ENCODE measurements at regions of chr12 and their contacts with region 1.

Region 1: GRCh38 chr12:75480469-75480949 is at the start of gene GLIPR1:
- DNase-seq: peak; percentile 98
- H3K4me3 ChIP-seq: peak within 1 kb of the TSS; percentile 56
- CTCF ChIP-seq: no peak

Region 2: DNA sequence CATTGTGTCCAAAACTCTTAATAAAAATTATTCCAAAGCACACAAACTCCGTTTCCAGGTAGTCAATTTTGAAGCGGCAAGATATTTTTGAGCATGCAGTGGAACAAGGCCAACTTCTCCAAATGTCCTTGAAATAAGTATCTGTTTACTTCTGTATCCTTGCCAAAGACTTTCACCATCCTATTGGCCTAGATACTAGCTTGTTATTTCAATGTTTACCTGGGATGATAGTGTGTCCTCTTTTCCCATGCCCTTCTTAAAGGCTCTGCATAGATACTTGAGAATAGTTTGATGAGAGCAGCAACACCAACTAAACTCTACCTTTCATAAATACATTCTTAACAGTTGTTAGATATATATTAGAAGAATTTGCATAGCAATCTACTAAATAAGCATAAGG is 431.7 kb before region 1 on chr12:
- CTCF ChIA-PET with region 1: no interaction called
- POLR2A ChIA-PET with region 1: no interaction called
- DNase-seq: no peak
- H3K4me3 ChIP-seq: no peak overlapping the region
- CTCF ChIP-seq: no peak

Region 3: DNA sequence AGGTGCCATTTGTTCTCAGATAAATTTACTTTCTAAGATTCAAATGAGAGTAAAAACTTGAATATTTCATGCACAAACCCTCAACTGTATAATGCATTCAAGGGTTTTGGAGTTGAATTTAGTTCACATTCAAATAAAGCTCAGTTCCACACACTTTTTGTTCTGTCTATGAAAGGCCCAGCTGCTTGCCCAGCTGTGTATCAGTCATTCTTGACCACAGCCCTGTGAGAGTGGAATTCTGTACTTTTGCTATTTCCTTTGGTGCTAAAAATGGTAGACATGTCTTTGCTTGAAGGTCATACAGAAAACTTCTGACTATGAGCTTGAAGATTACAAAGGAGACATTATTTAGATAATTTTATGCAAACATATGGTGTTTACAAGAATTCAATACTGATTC is 381.3 kb before region 1 on chr12:
- CTCF ChIA-PET with region 1: no interaction called
- POLR2A ChIA-PET with region 1: no interaction called
- DNase-seq: no peak
- H3K4me3 ChIP-seq: no peak overlapping the region
- CTCF ChIP-seq: no peak

Region 4: GRCh38 chr12:75275702-75276101 is 204.8 kb before region 1 on chr12:
- CTCF ChIA-PET with region 1: no interaction called
- POLR2A ChIA-PET with region 1: no interaction called
- DNase-seq: no peak
- H3K4me3 ChIP-seq: no peak overlapping the region
- CTCF ChIP-seq: no peak

Region 5: DNA sequence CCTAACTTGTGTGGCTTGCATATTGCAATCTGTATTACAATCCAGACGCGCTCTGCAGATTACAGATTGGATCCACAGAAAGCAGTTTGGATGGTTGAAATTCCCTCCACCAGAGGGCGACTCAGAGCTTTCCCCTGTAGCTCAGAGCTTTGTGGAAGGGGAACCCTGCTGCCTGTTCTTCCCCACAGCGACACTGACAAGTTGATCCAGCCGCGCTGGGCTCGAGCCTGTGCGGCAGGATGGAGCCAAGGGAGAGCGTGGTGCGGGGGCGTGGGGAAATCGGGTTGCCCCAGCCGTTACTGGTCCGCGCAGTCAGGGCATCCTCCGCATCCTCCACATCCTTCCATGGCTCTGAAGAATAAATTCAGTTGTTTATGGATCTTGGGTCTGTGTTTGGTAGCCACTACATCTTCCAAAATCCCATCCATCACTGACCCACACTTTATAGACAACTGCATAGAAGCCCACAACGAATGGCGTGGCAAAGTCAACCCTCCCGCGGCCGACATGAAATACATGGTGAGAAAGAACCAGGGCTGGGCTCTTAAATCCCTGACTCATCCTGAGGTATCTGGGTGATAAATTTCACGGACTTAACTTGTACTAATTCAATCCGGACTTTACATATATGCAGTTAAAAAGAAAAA is 146.0 kb before region 1 on chr12 and contains the start of gene GLIPR1L1:
- CTCF ChIA-PET with region 1: interaction called, 145 read pairs
- POLR2A ChIA-PET with region 1: interaction called, 6 read pairs
- DNase-seq: peak; percentile 53
- H3K4me3 ChIP-seq: peak within 1 kb of the TSS; percentile 62
- CTCF ChIP-seq: peak; percentile 84

Region 6: GRCh38 chr12:75360920-75361319 is 119.6 kb before region 1 on chr12:
- CTCF ChIA-PET with region 1: no interaction called
- POLR2A ChIA-PET with region 1: no interaction called
- DNase-seq: no peak
- H3K4me3 ChIP-seq: no peak overlapping the region
- CTCF ChIP-seq: no peak

Region 7: DNA sequence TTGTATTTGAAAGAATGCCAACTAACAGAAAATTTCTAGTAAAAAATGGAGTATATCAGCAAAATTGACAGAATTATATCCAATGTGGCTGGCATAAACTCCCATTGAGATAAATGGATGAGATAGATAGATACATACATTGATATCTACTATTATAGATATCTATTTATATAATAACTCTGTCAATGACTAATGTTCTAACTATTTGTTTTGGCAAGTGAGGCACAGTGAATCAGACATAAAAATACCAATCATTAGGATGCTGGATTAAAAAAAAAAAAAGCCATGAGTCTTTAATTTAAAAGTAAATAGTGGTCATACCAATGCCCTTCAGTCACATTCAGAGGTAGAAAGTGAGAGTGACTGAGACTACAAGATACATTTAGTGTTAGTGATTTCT is 33.7 kb before region 1 on chr12:
- CTCF ChIA-PET with region 1: interaction called, 14 read pairs
- POLR2A ChIA-PET with region 1: interaction called, 9 read pairs
- DNase-seq: peak; percentile 45
- H3K4me3 ChIP-seq: no peak overlapping the region
- CTCF ChIP-seq: no peak

Region 8: DNA sequence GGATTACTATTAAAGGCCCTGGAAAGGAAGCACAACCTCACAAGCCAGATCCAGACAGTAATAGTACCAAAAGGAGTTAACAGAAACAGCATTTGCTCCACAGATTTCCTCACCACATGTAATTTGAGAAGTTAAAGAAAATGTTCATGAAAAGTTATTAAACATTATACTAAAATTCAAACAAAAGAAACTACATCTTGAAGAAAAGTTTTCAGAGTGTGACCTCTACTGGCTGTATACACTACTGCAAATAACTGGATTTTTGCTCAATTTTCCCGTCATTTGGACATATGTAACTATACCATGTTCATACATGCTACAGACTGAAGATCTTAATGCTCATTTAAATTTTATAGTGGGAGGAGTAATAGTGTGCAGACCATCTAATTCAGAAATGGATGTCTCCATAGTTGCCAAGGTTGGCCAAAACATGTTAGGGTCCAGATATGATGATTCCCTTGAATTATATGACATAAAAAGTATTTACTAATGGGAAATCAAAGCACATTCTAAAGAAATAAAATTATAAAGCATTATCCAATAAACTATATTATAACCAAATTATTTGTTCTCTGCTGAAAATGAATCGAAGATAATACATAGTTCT is 25.3 kb after region 1 on chr12:
- CTCF ChIA-PET with region 1: interaction called, 81 read pairs
- POLR2A ChIA-PET with region 1: interaction called, 3 read pairs
- DNase-seq: no peak
- H3K4me3 ChIP-seq: no peak overlapping the region
- CTCF ChIP-seq: peak; percentile 41

Region 9: GRCh38 chr12:75511116-75512048 is 30.9 kb after region 1 on chr12 and contains the start of gene KRR1:
- CTCF ChIA-PET with region 1: interaction called, 20 read pairs
- POLR2A ChIA-PET with region 1: interaction called, 7 read pairs
- DNase-seq: peak; percentile 93
- H3K4me3 ChIP-seq: peak within 1 kb of the TSS; percentile 83
- CTCF ChIP-seq: no peak